GM13976 (cell line): ENCODE measurements at regions of chr6 and their contacts with region 1.

Region 1: DNA sequence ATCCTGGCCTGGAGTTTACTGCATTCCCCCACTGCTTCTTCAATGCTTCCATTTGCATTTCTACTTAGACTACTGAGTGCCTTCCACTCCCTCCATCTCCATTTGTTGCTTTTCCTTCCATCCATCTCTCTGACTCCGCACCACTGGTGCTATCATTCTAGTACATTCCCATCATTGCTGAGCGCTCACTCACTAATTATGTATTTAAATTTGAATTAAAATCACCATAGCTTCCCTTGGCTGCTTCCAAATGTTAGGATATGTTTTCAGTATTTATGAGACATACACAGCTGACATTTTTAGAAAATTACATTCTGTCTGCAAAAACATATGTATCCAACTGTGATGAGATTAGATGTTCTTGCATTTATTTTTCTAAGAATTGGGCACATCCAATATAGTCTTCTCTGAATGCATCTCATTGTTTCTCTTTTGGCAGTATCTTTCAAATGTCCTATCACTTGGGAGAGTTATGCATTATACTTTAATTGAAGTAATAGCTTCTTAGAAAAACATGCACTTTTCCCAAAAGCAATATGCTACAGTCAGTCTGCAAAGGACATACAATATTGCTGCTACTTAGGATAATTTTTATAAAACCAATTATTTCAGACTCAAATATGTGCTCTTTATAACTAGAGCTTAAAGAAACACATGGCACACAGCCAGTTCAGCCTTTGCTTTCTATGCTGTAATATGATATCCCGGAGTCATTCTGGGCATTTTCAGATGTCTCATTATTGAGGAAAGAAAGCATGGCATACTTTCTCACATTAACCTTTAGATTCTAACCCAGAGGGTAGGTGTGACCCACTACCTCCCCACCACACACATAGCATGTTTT is 12.1 kb upstream of the COL21A1 start:
- DNase-seq: no peak
- CTCF ChIP-seq: no peak

Region 2: DNA sequence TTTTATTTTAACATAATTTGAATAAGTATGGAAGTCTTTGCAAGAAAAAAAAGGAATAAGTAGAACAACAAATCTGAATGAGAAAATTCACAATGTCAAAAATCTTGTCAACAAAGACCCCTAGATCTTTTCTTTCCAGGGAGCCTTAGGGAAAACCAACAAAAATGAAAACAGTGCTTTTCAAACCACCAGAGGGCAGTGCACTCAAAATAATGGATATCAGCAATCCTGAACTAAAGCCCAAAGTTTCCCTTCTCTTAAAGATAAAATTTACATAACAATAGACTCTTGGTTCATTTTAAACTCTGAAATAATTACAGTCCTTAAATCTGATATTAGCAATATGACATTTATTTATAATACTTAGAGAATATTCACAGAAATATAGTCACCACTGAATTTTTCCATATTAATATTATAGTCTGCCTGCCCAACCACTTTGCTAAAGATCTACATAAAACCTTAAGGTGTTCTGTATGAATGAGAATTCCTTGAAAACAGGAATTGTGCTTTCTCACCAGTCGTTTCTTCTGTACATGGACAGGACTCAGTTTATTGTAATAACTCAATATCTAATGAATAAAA is 278.7 kb before region 1 on chr6:
- in situ Hi-C with region 1: loop called (anchors 25 kb)
- DNase-seq: peak; percentile 36
- CTCF ChIP-seq: peak; percentile 50

Region 3: GRCh38 chr6:56757588-56757984 is 498.1 kb after region 1 on chr6:
- in situ Hi-C with region 1: no loop called
- DNase-seq: no peak
- CTCF ChIP-seq: peak; percentile 17